AG04450 (cell line): ENCODE measurements at regions of chr1 and their contacts with region 1.

Region 1: GRCh38 chr1:26145041-26145959 is 13.6 kb upstream of the FAM110D start:
- DNase-seq: peak; percentile 61
- H3K4me3 ChIP-seq: no peak overlapping the region
- H3K27ac ChIP-seq: no peak overlapping the region
- H3K27me3 ChIP-seq: peaks cover 12% of the 10 kb centered on the region
- CTCF ChIP-seq: peak; percentile 78

Region 2: DNA sequence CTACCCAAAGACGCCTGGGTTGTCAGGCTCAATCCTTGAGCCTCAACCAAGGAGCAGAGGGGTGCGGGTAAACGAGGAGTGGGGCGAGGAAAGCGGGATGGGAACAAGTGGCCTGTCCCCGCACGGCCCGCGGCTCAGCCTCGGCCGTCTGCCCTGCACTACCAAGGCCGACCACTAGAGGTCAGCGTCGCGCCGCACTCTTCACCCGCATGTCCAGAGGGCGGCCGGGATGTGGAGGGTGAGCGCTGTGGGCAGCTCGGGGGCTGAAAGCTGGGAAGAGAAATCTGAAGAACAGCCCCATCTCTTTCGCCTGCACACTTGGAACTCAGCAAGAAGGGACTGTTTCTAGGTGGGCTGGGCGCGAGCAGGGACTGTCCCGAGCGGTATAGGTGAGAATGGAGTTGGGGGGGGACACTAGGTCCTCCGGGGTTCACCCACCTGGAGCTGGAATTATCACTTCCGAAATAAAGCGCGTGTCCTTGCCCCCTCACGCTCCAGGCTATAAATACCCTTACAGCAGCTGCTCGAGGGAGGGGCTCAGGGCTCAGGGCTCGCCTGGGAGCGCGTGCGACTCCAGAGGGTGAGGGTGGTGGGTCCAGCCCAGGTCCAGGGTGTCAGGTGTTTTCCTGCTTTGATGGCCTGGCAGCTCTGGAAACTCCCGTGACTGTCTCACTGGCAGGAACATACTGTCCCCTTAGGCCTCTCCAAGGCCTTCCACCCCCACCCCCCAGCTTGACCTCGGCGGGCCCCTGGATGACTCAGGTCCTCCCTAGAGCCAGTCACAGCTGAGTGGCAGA is 109.1 kb before region 1 on chr1:
- CTCF ChIA-PET with region 1: interaction called, 65 read pairs
- POLR2A ChIA-PET with region 1: interaction called, 3 read pairs
- DNase-seq: peak; percentile 23
- H3K4me3 ChIP-seq: peak overlapping the region; percentile 85
- H3K27ac ChIP-seq: no peak overlapping the region
- H3K27me3 ChIP-seq: peaks cover 12% of the 10 kb centered on the region
- CTCF ChIP-seq: peak; percentile 95

Region 3: GRCh38 chr1:26102526-26102925 is 42.8 kb before region 1 on chr1:
- CTCF ChIA-PET with region 1: interaction called, 61 read pairs
- POLR2A ChIA-PET with region 1: no interaction called
- DNase-seq: no peak
- H3K4me3 ChIP-seq: no peak overlapping the region
- H3K27ac ChIP-seq: no peak overlapping the region
- H3K27me3 ChIP-seq: peaks cover 8% of the 10 kb centered on the region
- CTCF ChIP-seq: no peak

Region 4: DNA sequence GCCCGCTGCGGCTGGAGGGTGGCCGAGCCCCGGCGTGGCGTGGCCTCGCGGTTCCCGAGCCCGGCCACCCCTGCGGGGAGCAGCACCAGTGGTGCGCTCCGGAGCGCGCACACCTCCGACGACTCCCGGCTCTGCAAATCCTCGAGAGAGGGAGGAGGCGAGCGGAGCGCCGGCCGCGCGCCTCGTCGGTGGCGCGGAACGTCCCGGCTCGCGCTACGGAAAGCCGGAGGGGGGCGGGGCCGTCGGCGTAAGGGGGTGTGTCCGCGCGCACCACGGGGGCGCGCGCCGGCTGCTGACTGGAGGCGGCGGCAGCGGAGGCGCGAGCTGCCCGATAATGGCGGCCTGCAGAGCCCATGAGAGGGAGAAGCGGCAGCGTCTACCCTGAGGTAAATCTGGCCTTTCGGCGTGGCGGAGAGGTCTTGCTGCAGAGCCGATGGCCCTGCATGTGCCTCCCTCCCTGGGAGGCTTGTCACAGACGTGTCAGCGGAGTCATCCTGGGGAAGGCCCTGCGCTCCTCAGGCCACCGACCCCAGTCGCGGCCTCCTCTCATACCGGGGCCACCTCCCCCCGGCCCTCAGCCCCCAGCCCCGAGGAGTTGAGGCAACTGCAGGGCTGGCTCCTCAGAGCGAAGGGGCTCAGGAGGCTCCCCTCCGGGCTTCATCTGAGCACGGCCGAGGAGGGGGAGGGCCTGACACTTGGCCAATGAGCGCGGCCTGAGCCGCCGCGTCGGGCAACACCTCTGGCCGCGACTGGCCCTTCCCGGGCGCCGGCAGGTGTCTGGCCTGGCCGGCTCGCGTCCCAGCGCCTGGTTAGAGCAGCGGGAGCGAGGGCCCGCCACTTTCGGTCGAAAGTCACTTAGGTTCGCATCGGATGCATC is 33.5 kb before region 1 on chr1 and contains the start of gene PDIK1L:
- CTCF ChIA-PET with region 1: interaction called, 61 read pairs
- POLR2A ChIA-PET with region 1: interaction called, 6 read pairs
- DNase-seq: peak; percentile 90
- H3K4me3 ChIP-seq: peak within 1 kb of the TSS; percentile 98
- H3K27ac ChIP-seq: peak within 1 kb of the TSS; percentile 47
- H3K27me3 ChIP-seq: no peaks in the 10 kb centered on the region
- CTCF ChIP-seq: no peak
- polyA plus RNA-seq, gene PDIK1L: 2.9 and 3.0 TPM in 2 replicates

Region 5: GRCh38 chr1:26126321-26127084 is 18.8 kb before region 1 on chr1:
- CTCF ChIA-PET with region 1: interaction called, 41 read pairs
- POLR2A ChIA-PET with region 1: no interaction called
- DNase-seq: no peak
- H3K4me3 ChIP-seq: no peak overlapping the region
- H3K27ac ChIP-seq: no peak overlapping the region
- H3K27me3 ChIP-seq: peaks cover 5% of the 10 kb centered on the region
- CTCF ChIP-seq: no peak

Region 6: GRCh38 chr1:26156704-26157038 is 11.4 kb after region 1 on chr1:
- CTCF ChIA-PET with region 1: interaction called, 32 read pairs
- POLR2A ChIA-PET with region 1: interaction called, 3 read pairs
- DNase-seq: no peak
- H3K4me3 ChIP-seq: no peak overlapping the region
- H3K27ac ChIP-seq: no peak overlapping the region
- H3K27me3 ChIP-seq: peaks cover 40% of the 10 kb centered on the region
- CTCF ChIP-seq: no peak